Testis (tissue), 5 donors: ENCODE measurements at regions of chr21 and their contacts with region 1.

Region 1: DNA sequence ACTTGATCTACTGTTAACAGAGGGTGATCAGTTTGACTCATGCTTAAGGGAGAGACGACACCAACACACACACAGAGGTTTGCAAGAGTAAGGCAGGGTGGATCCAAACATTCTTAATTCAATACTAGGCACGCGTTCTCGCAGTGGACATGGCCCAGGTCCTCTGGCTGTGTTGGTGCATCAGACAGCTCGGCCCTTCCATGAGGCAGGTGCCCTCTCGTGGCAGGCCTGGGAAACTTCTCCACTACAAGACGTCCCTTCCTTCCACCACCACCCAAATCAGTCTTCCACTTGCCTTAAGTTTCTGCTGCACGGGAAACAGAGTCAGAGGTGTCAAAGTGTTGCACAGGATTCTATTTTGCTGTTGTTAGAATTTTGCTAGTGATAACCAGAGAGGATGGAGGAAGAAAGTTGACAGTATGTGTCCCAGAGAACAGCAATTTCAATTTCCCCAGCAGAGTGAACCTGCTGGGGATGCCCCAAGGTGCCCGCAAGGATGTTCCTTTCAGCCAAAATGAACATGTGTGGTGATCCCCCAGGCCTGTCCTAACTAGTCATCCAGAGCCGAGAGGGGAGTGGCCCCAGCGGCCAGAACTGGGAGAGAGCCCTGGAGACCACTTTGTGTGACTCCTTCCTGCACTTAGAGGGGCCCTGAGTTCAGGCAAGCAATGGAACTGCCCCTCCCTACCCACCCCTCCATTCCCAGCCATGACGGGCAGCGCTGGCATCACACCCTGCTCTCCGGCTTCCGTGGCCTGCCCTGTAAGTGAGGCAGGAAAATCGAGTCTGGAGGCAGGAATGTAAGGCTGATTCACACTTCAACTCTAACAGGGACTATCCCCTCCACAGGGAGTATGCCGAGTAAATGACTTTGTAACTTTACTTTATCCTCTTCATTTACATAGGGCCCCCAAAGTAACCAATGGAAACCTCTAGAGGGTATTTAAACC is 34.8 kb downstream of the MX1 start:
- DNase-seq: peak; percentile 87
- H3K4me3 ChIP-seq: no peak overlapping the region
- H3K27ac ChIP-seq: no peak overlapping the region
- H3K4me1 ChIP-seq: no peaks in the 10 kb centered on the region
- H3K27me3 ChIP-seq: no peaks in the 10 kb centered on the region
- CTCF ChIP-seq: peak; percentile 61 to 71 (median 69)
- POLR2A ChIP-seq: no peak

Region 2: GRCh38 chr21:41283211-41283818 is 177.5 kb before region 1 on chr21:
- intact Hi-C with region 1: loop called (anchors 5 kb)
- DNase-seq: peak; percentile 68
- H3K4me3 ChIP-seq: no peak overlapping the region
- H3K27ac ChIP-seq: no peak overlapping the region
- H3K4me1 ChIP-seq: peaks cover 3% of the 10 kb centered on the region
- H3K27me3 ChIP-seq: no peaks in the 10 kb centered on the region
- CTCF ChIP-seq: peak; percentile 30 to 72 (median 56)
- POLR2A ChIP-seq: no peak